ENCODE measurements at regions of chr1 and their contacts with region 1.

Region 1: DNA sequence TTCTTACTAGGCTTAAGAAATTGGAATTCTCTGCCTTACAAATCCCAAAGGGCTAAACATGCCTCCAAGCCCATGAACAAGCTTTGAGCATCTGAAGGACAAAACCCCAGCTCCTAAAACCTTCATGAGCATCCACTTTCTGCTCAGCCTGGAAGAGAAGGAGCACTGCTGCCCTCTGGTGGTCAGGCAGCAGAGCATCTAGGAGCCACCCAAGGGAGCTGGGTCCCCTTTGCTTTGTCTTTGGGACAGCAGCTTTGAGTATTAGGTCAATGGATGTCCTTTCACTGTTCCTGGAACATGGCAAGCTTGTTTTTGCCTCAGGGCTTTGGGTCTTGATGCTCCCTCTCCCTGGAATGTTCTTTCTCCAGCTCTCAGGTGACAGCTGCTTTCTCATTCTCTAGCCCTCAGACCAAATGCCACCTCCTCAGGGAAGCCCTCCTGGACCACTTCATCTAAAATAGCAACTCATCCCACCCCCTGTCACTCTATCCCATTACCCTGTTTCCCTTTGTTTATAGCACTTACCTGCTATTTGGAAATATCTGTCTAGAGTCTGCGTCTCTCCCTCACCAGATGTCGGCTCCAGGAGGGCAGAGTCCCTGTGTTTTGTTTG is 25.7 kb downstream of the RAB7B start:
- DNase-seq: peak; percentile 81
- ATAC-seq: peak; percentile 90
- H3K4me3 ChIP-seq: no peak overlapping the region
- H3K27ac ChIP-seq: no peak overlapping the region
- H3K4me1 ChIP-seq: no peaks in the 10 kb centered on the region
- H3K27me3 ChIP-seq: no peaks in the 10 kb centered on the region
- CTCF ChIP-seq: peak; percentile 97
- POLR2A ChIP-seq: peak; percentile 56
- RAD21 ChIP-seq: peak; percentile 99

Region 2: DNA sequence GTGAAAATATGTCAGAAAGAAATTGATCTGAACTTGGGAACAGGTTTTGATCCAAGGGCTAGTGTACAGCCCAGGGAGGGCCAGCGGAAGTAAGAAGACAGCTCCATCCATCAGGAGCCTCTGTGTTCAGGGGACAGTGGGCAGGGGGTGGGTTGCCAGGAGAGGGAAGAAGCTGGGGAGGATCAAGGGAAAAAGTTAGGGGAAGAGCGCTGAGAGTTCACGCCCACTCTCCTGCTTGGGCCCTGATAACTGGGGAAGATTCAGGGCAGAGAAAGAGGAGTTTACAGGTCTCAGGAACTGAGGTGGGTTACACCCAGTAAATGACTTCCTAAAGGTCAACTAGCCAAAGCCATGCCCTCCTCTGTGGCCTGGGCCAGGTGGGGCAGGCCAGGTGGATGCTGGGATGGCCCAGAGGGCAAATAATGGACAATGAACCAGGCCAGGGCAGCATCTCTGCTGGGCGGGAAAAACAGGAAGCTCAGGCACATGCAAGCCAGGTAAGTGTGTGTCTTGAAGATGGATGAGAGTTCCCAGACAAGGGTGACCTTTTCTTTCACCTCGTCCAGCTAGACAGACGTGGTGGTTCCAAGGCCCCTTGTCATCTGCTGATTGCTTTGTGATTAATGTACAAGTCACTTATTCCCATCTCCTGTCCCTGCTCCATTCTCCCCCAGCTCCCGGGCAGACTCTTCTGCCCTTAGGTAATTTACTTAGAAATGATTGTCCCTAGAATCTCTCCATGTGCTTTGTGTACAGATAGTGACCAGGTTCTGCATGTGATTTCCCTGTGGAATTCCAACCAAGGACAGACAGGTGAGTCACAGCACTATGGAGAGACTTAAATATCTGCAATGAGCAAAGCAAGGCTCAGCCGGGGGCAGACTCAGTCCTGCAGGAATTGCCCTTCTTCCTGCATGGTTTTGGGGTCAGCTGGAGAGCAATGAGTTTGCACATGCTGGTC is 1404.3 kb before region 1 on chr1:
- CTCF ChIA-PET with region 1: no interaction called
- POLR2A ChIA-PET with region 1: interaction called, 14 read pairs
- dilution Hi-C with region 1: no loop called
- in situ Hi-C with region 1: no loop called
- intact Hi-C with region 1: no loop called
- DNase-seq: peak; percentile 63
- ATAC-seq: no peak
- H3K4me3 ChIP-seq: no peak overlapping the region
- H3K27ac ChIP-seq: no peak overlapping the region
- H3K4me1 ChIP-seq: no peaks in the 10 kb centered on the region
- H3K27me3 ChIP-seq: peaks cover 10% of the 10 kb centered on the region
- CTCF ChIP-seq: no peak
- POLR2A ChIP-seq: no peak
- RAD21 ChIP-seq: no peak

Region 3: DNA sequence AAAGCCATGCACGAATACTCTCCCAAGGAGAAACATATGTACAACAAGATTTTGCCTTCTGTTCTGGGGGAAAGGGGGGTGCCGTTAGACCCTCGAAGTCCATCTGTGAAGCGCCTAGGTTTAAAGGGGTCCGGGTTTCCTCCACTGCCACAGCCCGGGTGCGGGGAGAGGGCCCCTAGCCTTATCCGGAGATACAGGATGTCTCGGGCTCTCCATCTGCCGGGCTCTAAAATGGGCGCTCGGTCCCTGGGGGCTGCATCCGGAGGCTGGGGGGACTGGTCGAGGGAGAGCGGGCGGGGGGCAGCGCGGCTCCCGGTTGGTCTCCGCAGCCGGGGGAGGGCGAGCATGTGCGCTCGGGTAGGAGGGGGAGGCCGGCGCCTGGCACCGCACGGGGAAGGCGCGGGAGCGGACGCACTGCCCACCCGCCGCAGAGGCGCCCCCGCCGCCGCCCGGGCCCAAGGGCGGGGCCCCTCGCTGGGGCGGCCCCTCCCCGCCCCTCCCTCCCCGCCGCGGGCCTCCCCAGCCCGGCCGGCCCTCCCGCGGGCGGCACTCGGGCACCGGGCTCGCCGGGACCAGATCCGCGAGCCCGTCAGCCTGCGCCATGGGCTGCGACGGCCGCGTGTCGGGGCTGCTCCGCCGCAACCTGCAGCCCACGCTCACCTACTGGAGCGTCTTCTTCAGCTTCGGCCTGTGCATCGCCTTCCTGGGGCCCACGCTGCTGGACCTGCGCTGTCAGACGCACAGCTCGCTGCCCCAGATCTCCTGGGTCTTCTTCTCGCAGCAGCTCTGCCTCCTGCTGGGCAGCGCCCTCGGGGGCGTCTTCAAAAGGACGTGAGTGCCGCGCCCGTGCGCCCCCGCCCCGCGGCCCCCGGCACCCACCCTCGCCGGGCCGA is 408.8 kb before region 1 on chr1:
- CTCF ChIA-PET with region 1: no interaction called
- POLR2A ChIA-PET with region 1: no interaction called
- dilution Hi-C with region 1: no loop called
- in situ Hi-C with region 1: no loop called
- intact Hi-C with region 1: no loop called
- DNase-seq: no peak
- ATAC-seq: peak; percentile 51
- H3K4me3 ChIP-seq: 0 out of 2 replicates have a peak overlapping the region, but pooled peaks have one; percentile 23
- H3K27ac ChIP-seq: no peak overlapping the region
- H3K4me1 ChIP-seq: peaks cover 2% of the 10 kb centered on the region; the same call in 1 of the 2 replicates
- H3K27me3 ChIP-seq: peaks cover 82% of the 10 kb centered on the region
- CTCF ChIP-seq: no peak
- POLR2A ChIP-seq: no peak
- RAD21 ChIP-seq: no peak

Region 4: DNA sequence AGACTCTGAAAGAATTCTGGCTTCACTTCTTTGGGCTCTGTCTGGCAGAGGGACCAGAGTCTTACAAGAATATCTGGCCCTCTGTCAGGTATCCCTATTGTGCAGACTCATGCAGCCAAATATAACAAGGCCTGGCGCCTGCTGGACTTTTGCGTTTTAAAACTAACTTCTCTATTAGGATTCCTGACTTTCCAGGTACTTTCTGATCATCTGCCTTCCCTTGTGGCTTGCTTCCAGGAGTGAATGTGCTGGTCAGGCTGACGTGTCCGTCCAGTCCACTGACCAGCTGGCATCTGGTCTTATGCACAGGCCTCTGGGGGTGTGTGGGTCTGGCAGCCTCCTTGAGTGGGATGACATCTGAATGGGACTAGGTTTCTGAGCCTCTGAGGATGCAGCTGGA is 193.6 kb before region 1 on chr1:
- CTCF ChIA-PET with region 1: interaction called, 11 read pairs
- POLR2A ChIA-PET with region 1: no interaction called
- dilution Hi-C with region 1: no loop called
- in situ Hi-C with region 1: no loop called
- intact Hi-C with region 1: no loop called
- DNase-seq: peak; percentile 48
- ATAC-seq: no peak
- H3K4me3 ChIP-seq: no peak overlapping the region
- H3K27ac ChIP-seq: no peak overlapping the region
- H3K4me1 ChIP-seq: no peaks in the 10 kb centered on the region
- H3K27me3 ChIP-seq: peaks cover 2% of the 10 kb centered on the region
- CTCF ChIP-seq: no peak
- POLR2A ChIP-seq: no peak
- RAD21 ChIP-seq: no peak

Region 5: GRCh38 chr1:205812878-205813754 is 164.4 kb before region 1 on chr1 and contains the start of gene SLC41A1:
- CTCF ChIA-PET with region 1: interaction called, 5 read pairs
- POLR2A ChIA-PET with region 1: no interaction called
- dilution Hi-C with region 1: no loop called
- in situ Hi-C with region 1: no loop called
- intact Hi-C with region 1: loop called (anchors 1 kb)
- DNase-seq: peak; percentile 85
- ATAC-seq: peak; percentile 95
- H3K4me3 ChIP-seq: peak within 1 kb of the TSS; percentile 63
- H3K27ac ChIP-seq: peak within 1 kb of the TSS; percentile 57
- H3K4me1 ChIP-seq: peaks cover 6% of the 10 kb centered on the region; the same call in 1 of the 2 replicates
- H3K27me3 ChIP-seq: no peaks in the 10 kb centered on the region; the same call in 1 of the 2 replicates
- CTCF ChIP-seq: no peak
- POLR2A ChIP-seq: peak; percentile 67; the same call in 1 of the 2 replicates
- RAD21 ChIP-seq: no peak
- total RNA-seq, gene SLC41A1: 6.3 and 6.7 TPM in 2 replicates

Region 6: DNA sequence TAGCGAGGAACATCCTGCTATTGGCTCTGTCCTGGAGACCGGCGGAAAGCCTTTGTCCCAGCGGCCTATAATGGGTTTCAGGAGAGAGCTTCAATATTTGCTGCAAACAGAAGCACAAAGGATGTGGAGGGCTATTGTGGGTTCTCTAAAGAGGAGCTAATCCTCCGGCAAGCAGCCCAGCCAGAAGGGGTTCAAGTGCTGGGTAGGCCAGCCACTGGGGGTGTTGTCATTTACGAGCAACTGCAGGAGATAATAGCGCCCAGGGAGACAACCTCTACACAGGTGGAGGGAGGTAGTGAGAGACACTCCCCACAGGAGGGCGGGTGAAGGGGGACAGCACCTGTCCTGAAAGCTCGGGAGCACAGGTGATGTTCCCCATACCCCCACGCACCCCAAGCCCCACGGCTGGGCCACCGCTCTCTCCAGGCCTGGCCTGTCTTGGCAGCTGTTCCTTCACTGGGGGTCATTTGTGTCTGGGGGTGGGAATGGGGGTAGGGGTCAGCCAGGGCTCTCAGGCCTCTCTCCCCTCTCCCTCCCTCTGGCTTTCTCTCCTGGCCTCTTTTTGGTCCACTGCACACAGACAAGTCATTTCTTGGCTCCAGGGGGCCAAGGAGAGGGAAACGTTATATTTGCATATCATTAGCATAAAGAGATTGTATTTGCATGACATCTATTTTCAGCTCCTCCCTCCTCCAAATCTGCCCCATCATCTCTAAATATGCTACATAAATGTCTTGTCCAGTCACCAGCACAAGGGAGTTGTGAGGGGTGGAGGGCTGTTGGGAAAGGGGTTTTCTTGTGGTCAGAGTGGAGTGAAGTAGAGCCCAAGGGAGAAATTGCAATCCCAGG is 12.2 kb before region 1 on chr1:
- CTCF ChIA-PET with region 1: interaction called, 13 read pairs
- POLR2A ChIA-PET with region 1: no interaction called
- dilution Hi-C with region 1: no loop called
- in situ Hi-C with region 1: no loop called
- intact Hi-C with region 1: no loop called
- DNase-seq: no peak
- ATAC-seq: no peak
- H3K4me3 ChIP-seq: no peak overlapping the region
- H3K27ac ChIP-seq: no peak overlapping the region
- H3K4me1 ChIP-seq: no peaks in the 10 kb centered on the region
- H3K27me3 ChIP-seq: peaks cover 36% of the 10 kb centered on the region
- CTCF ChIP-seq: no peak
- POLR2A ChIP-seq: no peak
- RAD21 ChIP-seq: no peak